Pancreas (tissue), 10 donors: ENCODE measurements at regions of chr7 and their contacts with region 1.

Region 1: DNA sequence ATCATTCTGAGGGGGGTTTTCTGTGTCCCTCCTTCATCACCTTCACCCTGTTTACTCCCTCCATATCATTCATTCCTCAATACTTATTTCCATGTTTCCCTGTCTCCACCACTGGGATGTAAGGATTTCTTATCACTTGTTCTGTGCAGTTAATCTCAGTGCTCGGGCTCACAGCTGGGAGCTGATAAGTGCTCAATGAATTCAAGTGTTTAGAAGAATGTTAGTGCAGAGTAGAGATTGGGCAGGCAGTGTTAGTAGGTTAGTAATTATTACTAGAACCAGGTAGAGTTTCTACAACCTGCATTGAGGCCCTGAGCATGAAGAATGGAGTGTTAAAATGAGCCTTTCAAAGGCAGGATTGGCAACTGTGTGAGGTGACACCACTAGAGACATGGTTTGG is 458.1 kb downstream of the AUTS2 start:
- DNase-seq: no peak
- ATAC-seq: no peak
- H3K4me3 ChIP-seq: no peak overlapping the region
- H3K27ac ChIP-seq: no peak overlapping the region
- H3K4me1 ChIP-seq: no peaks in the 10 kb centered on the region
- H3K27me3 ChIP-seq: no peaks in the 10 kb centered on the region
- CTCF ChIP-seq: no peak

Region 2: GRCh38 chr7:69526570-69526969 is 529.8 kb before region 1 on chr7:
- intact Hi-C with region 1: no loop called
- DNase-seq: no peak
- ATAC-seq: no peak
- H3K4me3 ChIP-seq: no peak overlapping the region
- H3K27ac ChIP-seq: no peak overlapping the region
- H3K4me1 ChIP-seq: no peaks in the 10 kb centered on the region
- H3K27me3 ChIP-seq: no peaks in the 10 kb centered on the region
- CTCF ChIP-seq: no peak

Region 3: GRCh38 chr7:69893906-69894305 is 162.5 kb before region 1 on chr7:
- intact Hi-C with region 1: no loop called
- DNase-seq: no peak
- ATAC-seq: peak in 1 of 4 donors; percentile 35
- H3K4me3 ChIP-seq: no peak overlapping the region
- H3K27ac ChIP-seq: no peak overlapping the region
- H3K4me1 ChIP-seq: no peaks in the 10 kb centered on the region
- H3K27me3 ChIP-seq: no peaks in the 10 kb centered on the region
- CTCF ChIP-seq: no peak

Region 4: GRCh38 chr7:70700055-70700940 is 643.9 kb after region 1 on chr7:
- intact Hi-C with region 1: loop called in 1 of 3 experiments (anchors 5 kb)
- DNase-seq: no peak
- ATAC-seq: no peak
- H3K4me3 ChIP-seq: no peak overlapping the region
- H3K27ac ChIP-seq: no peak overlapping the region
- H3K4me1 ChIP-seq: no peaks in the 10 kb centered on the region
- H3K27me3 ChIP-seq: no peaks in the 10 kb centered on the region
- CTCF ChIP-seq: no peak